ENCODE measurements at regions of chr2 and their contacts with region 1.

Region 1: DNA sequence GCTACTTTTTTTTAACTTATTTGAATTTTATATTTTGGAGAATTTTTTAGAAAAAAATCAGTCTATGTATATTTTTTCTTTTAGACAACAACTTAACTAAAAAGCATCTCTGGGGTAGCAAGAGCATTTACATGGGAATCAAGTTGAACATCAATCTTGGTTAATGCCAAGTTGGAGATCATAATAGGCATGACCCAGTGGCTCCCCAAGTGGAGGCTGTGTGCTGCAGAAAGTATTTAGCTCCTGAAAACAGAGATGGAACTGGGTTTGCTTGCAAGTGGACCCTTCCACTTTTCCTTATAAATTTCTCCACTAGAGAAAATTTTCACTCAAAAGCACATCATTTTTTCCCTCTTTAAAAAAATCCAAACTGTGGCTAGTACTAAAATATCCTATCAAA is 23.9 kb upstream of the CAVIN2 start:
- DNase-seq: no peak
- H3K4me3 ChIP-seq: no peak overlapping the region
- CTCF ChIP-seq: peak; percentile 27

Region 2: GRCh38 chr2:192151853-192152252 is 281.1 kb after region 1 on chr2:
- in situ Hi-C with region 1: loop called (anchors 5 kb)
- DNase-seq: peak; percentile 82
- H3K4me3 ChIP-seq: no peak overlapping the region
- CTCF ChIP-seq: no peak